BJ (cell line): ENCODE measurements at regions of chr9 and their contacts with region 1.

Region 1: DNA sequence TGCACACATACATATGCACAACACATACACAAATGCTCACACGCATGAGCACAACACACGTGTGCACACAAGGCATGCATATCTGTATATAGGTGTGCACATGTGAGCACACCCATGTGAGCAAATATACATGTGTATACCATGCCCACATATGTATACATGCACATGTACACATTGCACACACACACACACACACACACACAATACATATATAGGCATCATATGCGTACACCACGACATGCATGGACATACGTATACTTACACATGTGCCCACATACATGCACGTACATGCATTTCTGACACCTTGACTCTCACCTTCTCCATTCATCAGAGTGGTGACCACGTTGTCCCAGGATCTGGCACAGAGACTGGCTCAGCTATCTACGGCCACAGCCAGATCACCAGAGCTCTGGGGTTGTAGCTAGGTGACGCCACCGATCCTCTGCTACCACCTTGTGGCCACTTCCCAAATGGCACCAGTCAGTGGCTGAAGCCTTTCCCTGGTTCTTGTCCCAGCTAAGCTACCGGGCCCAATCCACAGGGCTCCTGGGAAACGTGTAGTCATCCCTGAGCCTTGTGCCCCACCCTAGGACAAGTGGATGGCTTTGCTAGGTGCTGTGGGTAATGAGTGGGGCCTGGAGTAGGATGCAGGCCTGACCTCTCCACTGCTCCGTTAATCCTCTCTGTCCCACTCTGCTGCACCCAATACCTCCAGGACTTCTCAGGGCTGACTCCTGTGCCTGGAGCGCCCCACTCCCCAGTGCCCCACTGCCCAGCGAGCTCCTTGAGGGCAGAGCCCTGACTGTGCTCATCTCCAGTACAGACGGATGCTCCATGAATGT is 194.4 kb downstream of the RGS3 start:
- DNase-seq: no peak
- H3K4me3 ChIP-seq: no peak overlapping the region
- H3K27me3 ChIP-seq: peaks cover 3% of the 10 kb centered on the region; the same call in 1 of the 2 replicates
- CTCF ChIP-seq: peak; percentile 96

Region 2: GRCh38 chr9:113275157-113276131 is 382.5 kb before region 1 on chr9 and contains the starts of genes CDC26 and PRPF4:
- CTCF ChIA-PET with region 1: interaction called, 10 read pairs
- POLR2A ChIA-PET with region 1: no interaction called
- DNase-seq: peak; percentile 92
- H3K4me3 ChIP-seq: peak within 1 kb of the TSS; percentile 63
- H3K27me3 ChIP-seq: no peaks in the 10 kb centered on the region
- CTCF ChIP-seq: no peak
- polyA plus RNA-seq, gene CDC26: 11.1 and 33.2 TPM in 2 replicates
- polyA plus RNA-seq, gene PRPF4: 16.6 and 18.3 TPM in 2 replicates

Region 3: DNA sequence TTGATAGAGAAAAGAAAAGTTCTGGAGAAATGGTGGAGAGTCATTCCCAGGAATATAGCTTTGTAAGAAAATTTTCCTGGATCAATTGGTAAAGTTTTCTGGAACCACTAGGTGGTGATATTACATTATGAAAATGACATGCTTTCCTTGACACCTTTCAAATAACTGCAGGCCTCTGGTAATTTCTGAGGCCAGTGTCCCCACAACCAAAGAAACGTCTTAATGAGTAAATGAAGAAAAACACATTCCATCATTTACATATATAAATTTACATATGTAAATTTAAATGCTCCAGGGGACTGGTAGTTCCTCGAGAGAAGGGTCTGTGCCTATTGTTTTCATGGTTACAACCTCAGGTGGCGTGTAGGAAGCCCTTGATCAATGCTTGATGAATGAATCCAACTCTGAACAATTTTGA is 211.6 kb before region 1 on chr9:
- CTCF ChIA-PET with region 1: interaction called, 157 read pairs
- POLR2A ChIA-PET with region 1: no interaction called
- DNase-seq: no peak
- H3K4me3 ChIP-seq: no peak overlapping the region
- H3K27me3 ChIP-seq: no peaks in the 10 kb centered on the region
- CTCF ChIP-seq: peak; percentile 49

Region 4: GRCh38 chr9:113578882-113579282 is 79.0 kb before region 1 on chr9:
- CTCF ChIA-PET with region 1: interaction called, 1,084 read pairs
- POLR2A ChIA-PET with region 1: no interaction called
- DNase-seq: peak; percentile 84
- H3K4me3 ChIP-seq: no peak overlapping the region
- H3K27me3 ChIP-seq: no peaks in the 10 kb centered on the region
- CTCF ChIP-seq: no peak

Region 5: DNA sequence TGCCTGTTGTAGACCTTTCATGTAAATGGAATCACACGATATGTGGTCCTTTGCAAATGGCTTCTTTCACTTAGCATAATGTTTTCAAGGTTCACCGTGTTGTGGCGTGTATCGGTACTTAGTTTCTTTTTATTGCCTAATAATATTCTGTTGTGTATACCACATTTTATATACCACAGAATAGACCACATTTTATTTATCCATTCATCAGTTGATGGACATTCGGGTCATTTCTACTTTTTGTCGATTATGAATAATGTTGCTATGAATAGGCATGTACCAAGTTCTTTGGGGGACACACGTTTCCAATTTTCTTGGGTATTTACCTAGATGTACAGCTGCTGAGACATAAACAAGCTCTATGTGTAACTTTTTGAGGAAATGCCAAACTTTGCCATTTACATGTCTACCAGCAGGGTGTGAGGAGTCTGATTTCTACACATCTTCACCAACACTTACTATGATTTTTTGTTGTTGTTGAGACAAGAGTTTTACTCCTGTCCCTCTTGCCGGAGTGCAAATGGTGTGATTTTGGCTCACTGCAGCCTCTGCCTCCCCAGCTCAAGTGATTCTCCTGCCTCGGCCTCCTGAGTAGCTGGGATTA is 49.7 kb before region 1 on chr9:
- CTCF ChIA-PET with region 1: interaction called, 1,084 read pairs
- POLR2A ChIA-PET with region 1: no interaction called
- DNase-seq: no peak
- H3K4me3 ChIP-seq: no peak overlapping the region
- H3K27me3 ChIP-seq: no peaks in the 10 kb centered on the region
- CTCF ChIP-seq: no peak; the same call in 1 of the 2 replicates

Region 6: DNA sequence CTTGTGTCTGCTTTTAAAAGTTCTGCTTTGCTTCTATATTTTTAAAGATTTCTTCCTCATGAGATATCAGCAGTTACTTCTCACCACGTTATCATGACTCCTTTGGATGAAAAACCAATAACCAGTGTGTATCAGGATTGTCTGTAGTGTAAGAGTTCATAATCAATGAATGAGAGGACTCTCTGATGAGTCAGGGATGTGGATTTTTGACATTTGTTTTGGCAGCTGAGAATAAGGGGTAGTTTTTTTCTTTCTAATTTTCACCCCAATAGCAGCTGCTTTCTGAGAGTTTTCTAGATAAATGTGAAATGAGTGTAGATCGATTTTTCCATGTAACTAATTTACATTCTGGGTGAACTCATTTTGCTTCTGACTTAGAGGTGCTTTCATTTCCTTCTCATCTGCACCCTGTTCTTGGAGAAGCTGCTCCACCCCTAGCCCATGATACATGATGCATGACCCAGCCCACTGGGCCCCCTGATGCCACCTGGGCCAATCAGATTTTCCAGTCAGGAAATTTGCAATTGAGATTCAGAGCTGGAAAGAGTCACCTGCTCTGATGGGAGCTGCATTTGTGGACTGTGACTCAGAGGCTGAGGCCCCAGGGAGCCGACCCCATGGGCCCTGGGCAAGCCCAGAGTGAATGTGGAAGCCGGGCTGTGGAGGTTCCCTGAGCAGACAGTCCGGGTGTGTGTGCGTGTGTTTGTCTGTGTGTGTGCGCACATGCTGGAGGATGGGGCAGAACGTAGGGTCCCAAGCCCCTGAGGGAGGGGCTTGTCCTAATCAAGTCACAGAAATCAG is 35.1 kb before region 1 on chr9:
- CTCF ChIA-PET with region 1: interaction called, 19 read pairs
- POLR2A ChIA-PET with region 1: no interaction called
- DNase-seq: no peak
- H3K4me3 ChIP-seq: no peak overlapping the region
- H3K27me3 ChIP-seq: no peaks in the 10 kb centered on the region
- CTCF ChIP-seq: no peak

Region 7: GRCh38 chr9:113638897-113639296 is 19.0 kb before region 1 on chr9:
- CTCF ChIA-PET with region 1: interaction called, 15 read pairs
- POLR2A ChIA-PET with region 1: no interaction called
- DNase-seq: no peak
- H3K4me3 ChIP-seq: no peak overlapping the region
- H3K27me3 ChIP-seq: peaks cover 3% of the 10 kb centered on the region
- CTCF ChIP-seq: no peak

Region 8: GRCh38 chr9:113695901-113696300 is 38.0 kb after region 1 on chr9:
- CTCF ChIA-PET with region 1: no interaction called
- POLR2A ChIA-PET with region 1: no interaction called
- DNase-seq: no peak
- H3K4me3 ChIP-seq: no peak overlapping the region
- H3K27me3 ChIP-seq: peaks cover 4% of the 10 kb centered on the region
- CTCF ChIP-seq: no peak

Region 9: GRCh38 chr9:113828221-113828620 is 170.3 kb after region 1 on chr9:
- CTCF ChIA-PET with region 1: no interaction called
- POLR2A ChIA-PET with region 1: no interaction called
- DNase-seq: no peak
- H3K4me3 ChIP-seq: no peak overlapping the region
- H3K27me3 ChIP-seq: peaks cover 2% of the 10 kb centered on the region
- CTCF ChIP-seq: no peak

Region 10: GRCh38 chr9:114072184-114073140 is 414.5 kb after region 1 on chr9:
- CTCF ChIA-PET with region 1: no interaction called
- POLR2A ChIA-PET with region 1: no interaction called
- DNase-seq: no peak
- H3K4me3 ChIP-seq: no peak overlapping the region
- H3K27me3 ChIP-seq: peaks cover 17% of the 10 kb centered on the region
- CTCF ChIP-seq: no peak